Cardiac septum (tissue), 1 donor: ENCODE measurements at regions of chr2 and their contacts with region 1.

Region 1: DNA sequence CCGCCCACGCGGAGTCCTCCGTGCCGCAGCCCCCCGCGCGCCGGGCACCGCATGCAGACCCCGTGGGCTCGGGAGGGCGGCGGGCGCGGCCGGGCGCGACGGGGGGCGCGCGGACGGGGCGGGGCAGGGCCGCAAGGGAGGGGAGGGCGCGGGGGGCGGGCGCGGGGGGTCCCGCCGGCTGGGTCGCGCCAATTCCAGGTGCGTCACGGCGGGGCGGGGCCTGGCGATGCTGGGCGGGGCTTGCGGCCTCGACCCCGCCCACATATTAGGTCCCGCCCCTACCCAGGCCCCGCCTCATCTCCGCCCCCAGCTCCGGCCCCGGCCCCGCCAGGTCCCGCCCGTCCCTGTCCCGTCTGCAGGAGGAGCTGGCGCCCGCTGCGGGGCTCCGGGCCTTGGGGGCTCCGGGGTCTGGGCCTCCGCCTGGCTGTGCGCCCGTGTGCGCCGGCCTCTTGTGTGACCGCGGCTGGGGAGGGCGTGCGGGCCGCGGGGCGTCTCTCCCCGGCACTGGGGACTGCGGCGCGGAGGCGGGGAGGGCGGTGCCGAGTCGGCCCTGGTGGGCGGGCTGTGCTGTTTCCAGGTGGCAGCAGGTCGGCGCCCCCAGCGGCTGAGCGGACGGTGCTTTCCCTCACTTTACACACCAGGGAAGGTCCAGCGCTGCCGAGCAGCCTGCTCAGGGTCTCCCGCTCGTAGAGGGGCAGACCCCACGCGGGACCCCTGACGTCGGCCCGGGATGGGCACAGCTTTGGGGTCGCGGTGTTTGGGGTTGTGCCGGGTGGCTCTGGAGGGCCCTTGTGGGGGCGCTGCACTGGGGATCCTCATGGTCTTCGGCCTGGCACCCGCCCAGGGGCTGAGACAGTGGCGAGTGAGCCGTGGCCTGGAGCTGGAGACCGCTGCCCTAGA is 543 bp downstream of the ING5 start:
- DNase-seq: peak; percentile 95

Region 2: GRCh38 chr2:241190291-241190981 is 511.9 kb before region 1 on chr2:
- intact Hi-C with region 1: no loop called
- DNase-seq: no peak

Region 3: GRCh38 chr2:241686649-241687425 is 15.5 kb before region 1 on chr2 and contains the start of gene DTYMK:
- intact Hi-C with region 1: loop called (anchors 2 kb)
- DNase-seq: peak; percentile 98
- total RNA-seq, gene DTYMK: 10.5 TPM

Region 4: GRCh38 chr2:241734467-241735208 is 32.3 kb after region 1 on chr2 and contains the start of gene D2HGDH:
- intact Hi-C with region 1: loop called (anchors 2 kb)
- DNase-seq: peak; percentile 98
- total RNA-seq, gene D2HGDH: 15.7 TPM

Region 5: DNA sequence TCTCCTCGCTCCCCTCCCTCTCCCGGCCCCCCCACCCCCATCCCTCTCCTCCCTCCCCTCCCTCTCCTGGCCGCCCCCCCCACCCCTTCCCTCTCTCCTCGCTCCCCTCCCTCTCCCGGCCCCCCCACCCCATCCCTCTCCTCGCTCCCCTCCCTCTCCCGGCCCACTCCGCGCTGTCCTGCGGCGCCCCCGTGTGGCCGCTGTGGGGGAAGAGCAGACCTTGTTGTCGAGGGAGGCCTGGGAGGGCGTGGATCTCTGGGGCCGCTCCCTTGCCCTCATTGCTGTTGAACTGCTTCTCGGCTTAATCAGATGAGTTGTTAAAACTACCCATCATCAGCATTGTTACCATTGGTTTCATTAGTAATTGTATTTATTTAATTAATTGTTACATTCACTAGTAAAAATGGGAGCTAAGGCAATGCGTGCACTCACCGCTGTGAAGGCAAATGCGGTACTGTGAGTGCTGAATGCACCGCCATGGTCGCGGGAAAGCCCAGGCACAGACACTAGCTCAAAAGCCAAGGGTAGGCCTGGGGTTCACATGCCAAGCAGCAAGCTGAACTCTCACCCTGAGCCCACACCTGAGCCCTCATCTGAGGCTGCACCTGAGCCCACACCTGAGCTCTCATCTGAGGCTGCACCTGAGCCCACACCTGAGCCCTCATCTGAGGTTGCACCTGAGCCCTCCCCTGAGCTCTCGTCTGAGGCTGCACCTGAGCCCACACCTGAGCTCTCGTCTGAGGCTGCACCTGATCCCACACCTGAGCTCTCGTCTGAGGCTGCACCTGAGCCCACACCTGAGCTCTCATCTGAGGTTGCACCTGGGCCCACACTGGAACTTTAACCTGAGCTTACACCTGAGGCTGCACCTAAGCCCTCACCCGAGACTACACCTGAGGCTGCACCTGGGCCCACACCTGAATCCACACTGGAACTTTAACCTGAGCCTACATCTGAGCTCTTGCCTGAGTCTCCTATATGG is 175.9 kb after region 1 on chr2:
- intact Hi-C with region 1: loop called (anchors 5 kb)
- DNase-seq: no peak